ENCODE measurements at regions of chr2 and their contacts with region 1.

Region 1: GRCh38 chr2:29196792-29197788 is 81.9 kb downstream of the CLIP4 start:
- DNase-seq: peak; percentile 91
- H3K4me3 Mint-ChIP-seq: no peak overlapping the region
- H3K27ac Mint-ChIP-seq: no peak overlapping the region
- H3K4me1 Mint-ChIP-seq: no peaks in the 10 kb centered on the region
- H3K27me3 Mint-ChIP-seq: no peaks in the 10 kb centered on the region

Region 2: GRCh38 chr2:28958689-28959088 is 238.4 kb before region 1 on chr2:
- CTCF ChIA-PET with region 1: interaction called, 6 read pairs
- intact Hi-C with region 1: loop called (anchors 1 kb)
- DNase-seq: peak; percentile 39
- H3K4me3 Mint-ChIP-seq: no peak overlapping the region
- H3K27ac Mint-ChIP-seq: no peak overlapping the region
- H3K4me1 Mint-ChIP-seq: no peaks in the 10 kb centered on the region
- H3K27me3 Mint-ChIP-seq: no peaks in the 10 kb centered on the region

Region 3: GRCh38 chr2:29053670-29054400 is 143.3 kb before region 1 on chr2:
- CTCF ChIA-PET with region 1: no interaction called
- intact Hi-C with region 1: loop called (anchors 1 kb)
- DNase-seq: no peak
- H3K4me3 Mint-ChIP-seq: no peak overlapping the region
- H3K27ac Mint-ChIP-seq: no peak overlapping the region
- H3K4me1 Mint-ChIP-seq: peaks cover 2% of the 10 kb centered on the region
- H3K27me3 Mint-ChIP-seq: no peaks in the 10 kb centered on the region

Region 4: GRCh38 chr2:29106980-29107388 is 90.1 kb before region 1 on chr2:
- CTCF ChIA-PET with region 1: no interaction called
- intact Hi-C with region 1: loop called (anchors 2 kb)
- DNase-seq: no peak
- H3K4me3 Mint-ChIP-seq: no peak overlapping the region
- H3K27ac Mint-ChIP-seq: no peak overlapping the region
- H3K4me1 Mint-ChIP-seq: peaks cover 10% of the 10 kb centered on the region
- H3K27me3 Mint-ChIP-seq: no peaks in the 10 kb centered on the region

Region 5: GRCh38 chr2:29165362-29166236 is 31.5 kb before region 1 on chr2:
- CTCF ChIA-PET with region 1: no interaction called
- intact Hi-C with region 1: no loop called
- DNase-seq: no peak
- H3K4me3 Mint-ChIP-seq: no peak overlapping the region
- H3K27ac Mint-ChIP-seq: no peak overlapping the region
- H3K4me1 Mint-ChIP-seq: no peaks in the 10 kb centered on the region
- H3K27me3 Mint-ChIP-seq: no peaks in the 10 kb centered on the region

Region 6: GRCh38 chr2:29212009-29212408 is 14.9 kb after region 1 on chr2:
- CTCF ChIA-PET with region 1: no interaction called
- intact Hi-C with region 1: no loop called
- DNase-seq: no peak
- H3K4me3 Mint-ChIP-seq: no peak overlapping the region
- H3K27ac Mint-ChIP-seq: no peak overlapping the region
- H3K4me1 Mint-ChIP-seq: no peaks in the 10 kb centered on the region
- H3K27me3 Mint-ChIP-seq: no peaks in the 10 kb centered on the region